Ovary (tissue), 10 donors: ENCODE measurements at regions of chr2 and their contacts with region 1.

Region 1: GRCh38 chr2:173692068-173692467 is 273.1 kb downstream of the SP3 start:
- DNase-seq: no peak
- H3K4me3 ChIP-seq: no peak overlapping the region
- H3K27ac ChIP-seq: no peak overlapping the region
- H3K4me1 ChIP-seq: no peaks in the 10 kb centered on the region
- H3K27me3 ChIP-seq: no peaks in the 10 kb centered on the region
- CTCF ChIP-seq: no peak
- EP300 ChIP-seq: no peak
- POLR2A ChIP-seq: no peak

Region 2: DNA sequence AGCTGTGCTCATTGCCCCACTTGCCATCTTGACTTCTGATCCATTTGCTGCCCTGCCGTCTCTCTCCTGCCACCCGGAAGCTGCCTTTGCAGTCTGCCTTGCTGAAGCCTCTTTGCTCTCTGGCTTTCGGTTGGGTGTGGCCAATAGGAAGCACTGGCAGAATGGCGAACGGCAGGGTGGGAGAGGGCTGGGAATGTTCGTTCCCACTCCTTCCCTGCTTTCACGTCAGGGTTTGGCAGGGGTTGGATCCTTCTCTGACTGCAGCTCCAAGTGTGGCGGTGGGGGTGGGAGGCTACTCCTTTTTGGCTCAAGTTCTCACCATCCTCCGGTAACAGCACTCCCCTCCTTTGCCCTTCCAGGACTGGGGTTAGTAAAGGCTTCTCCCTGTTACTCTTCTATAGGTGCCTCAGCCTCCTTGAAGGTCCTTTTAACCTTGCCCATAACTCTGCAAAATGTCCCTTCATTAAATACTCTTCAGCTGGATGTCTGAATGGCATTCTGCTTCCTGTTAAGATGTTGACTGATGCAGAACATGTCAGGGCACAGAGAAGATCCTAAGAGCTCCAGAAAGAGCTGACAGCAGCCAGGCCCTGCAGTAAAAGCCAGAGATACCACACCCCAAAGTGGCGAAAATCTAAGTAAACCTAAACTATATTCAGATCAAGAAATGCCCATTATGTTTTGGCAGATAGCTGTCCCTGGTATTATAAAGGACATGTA is 37.7 kb before region 1 on chr2:
- intact Hi-C with region 1: loop called in 1 of 4 experiments (anchors 2 kb)
- DNase-seq: no peak
- H3K4me3 ChIP-seq: no peak overlapping the region
- H3K27ac ChIP-seq: no peak overlapping the region
- H3K4me1 ChIP-seq: no peaks in the 10 kb centered on the region
- H3K27me3 ChIP-seq: no peaks in the 10 kb centered on the region
- CTCF ChIP-seq: no peak
- EP300 ChIP-seq: no peak
- POLR2A ChIP-seq: no peak

Region 3: GRCh38 chr2:173843526-173843925 is 151.5 kb after region 1 on chr2:
- intact Hi-C with region 1: no loop called
- DNase-seq: no peak
- H3K4me3 ChIP-seq: no peak overlapping the region
- H3K27ac ChIP-seq: no peak overlapping the region
- H3K4me1 ChIP-seq: no peaks in the 10 kb centered on the region
- H3K27me3 ChIP-seq: no peaks in the 10 kb centered on the region
- CTCF ChIP-seq: no peak
- EP300 ChIP-seq: no peak
- POLR2A ChIP-seq: no peak